ENCODE measurements at regions of chrX and their contacts with region 1.

Region 1: DNA sequence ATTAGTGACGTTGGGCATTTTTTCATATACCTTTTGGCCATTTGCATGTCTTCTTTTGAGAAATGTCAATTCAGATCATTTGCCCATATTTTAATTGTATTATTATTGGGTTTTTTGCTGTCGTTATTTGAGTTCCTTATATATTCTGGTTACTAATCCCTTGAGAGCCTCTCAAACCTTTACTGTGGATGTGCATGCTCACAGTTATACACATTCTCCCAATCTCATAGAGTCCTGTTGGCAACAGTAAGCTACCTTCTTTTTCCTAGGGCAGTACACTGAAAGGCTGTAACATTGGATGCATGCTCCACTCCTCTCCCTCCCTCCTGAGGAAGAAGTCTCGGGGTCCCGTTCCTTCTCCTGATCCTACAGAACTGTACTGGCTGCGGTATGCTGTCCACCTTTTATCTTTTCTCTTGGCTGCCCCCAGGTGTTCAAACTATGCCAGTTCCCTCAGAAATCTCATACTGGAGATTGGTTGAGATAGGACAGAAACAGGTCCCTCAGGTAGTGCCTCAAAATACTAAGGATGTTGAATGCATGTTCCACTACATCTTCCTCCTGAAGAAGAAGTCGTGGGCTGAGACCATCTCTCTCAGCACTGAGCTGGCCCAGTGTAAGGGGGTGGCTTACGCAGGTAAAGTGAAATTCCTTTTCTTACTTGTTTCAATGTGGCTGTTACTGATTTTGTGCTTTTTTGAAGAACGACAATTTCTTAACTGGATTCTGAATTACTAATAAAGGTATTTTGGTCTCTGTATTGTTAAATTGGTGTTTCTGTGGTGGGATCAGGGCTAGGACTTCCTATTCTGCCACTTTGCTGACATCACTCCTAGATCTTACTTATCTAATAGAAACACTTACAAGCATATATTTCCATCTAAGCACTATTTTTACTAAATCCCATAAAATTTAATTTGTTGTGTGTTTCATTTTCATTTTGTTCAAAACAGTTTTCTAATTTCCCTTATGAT is 145.4 kb upstream of the HUWE1 start:
- DNase-seq: peak; percentile 20
- H3K4me3 Mint-ChIP-seq: peak overlapping the region; percentile 35
- H3K27ac Mint-ChIP-seq: peak overlapping the region; percentile 13
- H3K4me1 Mint-ChIP-seq: peaks cover 20% of the 10 kb centered on the region
- H3K27me3 Mint-ChIP-seq: no peaks in the 10 kb centered on the region

Region 2: DNA sequence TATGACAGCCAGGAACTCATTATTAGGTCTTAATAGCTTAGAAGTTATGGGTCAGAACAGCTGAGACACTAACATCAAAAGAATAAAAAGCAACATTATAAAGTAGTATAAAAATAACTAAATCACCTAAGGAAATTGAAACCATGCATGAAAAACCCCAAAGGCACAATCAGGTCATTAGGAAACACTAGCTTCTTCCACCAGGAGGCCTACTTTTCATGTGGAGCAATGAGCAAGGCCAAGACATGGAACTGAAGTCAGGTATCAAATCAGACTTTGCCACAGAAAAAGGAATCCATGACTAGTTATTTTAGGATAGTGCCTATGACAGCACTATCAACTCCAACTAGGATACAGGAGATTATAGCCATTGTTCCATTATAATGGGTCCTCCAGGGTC is 153.3 kb before region 1 on chrX:
- intact Hi-C with region 1: loop called (anchors 2 kb)
- DNase-seq: no peak
- H3K4me3 Mint-ChIP-seq: no peak overlapping the region
- H3K27ac Mint-ChIP-seq: peak overlapping the region; percentile 61
- H3K4me1 Mint-ChIP-seq: peaks cover 42% of the 10 kb centered on the region
- H3K27me3 Mint-ChIP-seq: no peaks in the 10 kb centered on the region

Region 3: GRCh38 chrX:53714580-53715345 is 117.2 kb before region 1 on chrX:
- intact Hi-C with region 1: loop called (anchors 10 kb)
- DNase-seq: peak; percentile 70
- H3K4me3 Mint-ChIP-seq: peak overlapping the region; percentile 88
- H3K27ac Mint-ChIP-seq: peak overlapping the region; percentile 99
- H3K4me1 Mint-ChIP-seq: peaks cover 52% of the 10 kb centered on the region
- H3K27me3 Mint-ChIP-seq: no peaks in the 10 kb centered on the region

Region 4: DNA sequence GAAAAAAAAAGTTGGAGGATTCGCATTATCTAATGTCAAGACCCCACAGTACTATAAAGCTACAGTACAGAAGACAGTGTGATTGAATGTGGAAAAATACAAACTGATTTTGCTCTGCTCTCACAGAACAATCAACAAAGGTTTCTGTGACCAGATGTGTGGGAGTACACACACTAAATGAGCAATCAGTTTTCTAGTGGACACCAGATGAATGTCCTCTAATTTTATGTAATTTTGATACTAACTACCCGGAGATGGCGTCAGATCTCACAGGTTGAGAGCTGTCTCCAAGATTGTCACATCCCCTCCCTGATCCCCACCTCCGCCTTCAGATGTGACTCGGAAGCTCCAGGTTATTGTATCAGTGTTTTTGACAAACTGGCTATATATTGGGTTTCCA is 63.5 kb before region 1 on chrX:
- intact Hi-C with region 1: loop called (anchors 5 kb)
- DNase-seq: no peak
- H3K4me3 Mint-ChIP-seq: no peak overlapping the region
- H3K27ac Mint-ChIP-seq: no peak overlapping the region
- H3K4me1 Mint-ChIP-seq: peaks cover 7% of the 10 kb centered on the region
- H3K27me3 Mint-ChIP-seq: no peaks in the 10 kb centered on the region

Region 5: DNA sequence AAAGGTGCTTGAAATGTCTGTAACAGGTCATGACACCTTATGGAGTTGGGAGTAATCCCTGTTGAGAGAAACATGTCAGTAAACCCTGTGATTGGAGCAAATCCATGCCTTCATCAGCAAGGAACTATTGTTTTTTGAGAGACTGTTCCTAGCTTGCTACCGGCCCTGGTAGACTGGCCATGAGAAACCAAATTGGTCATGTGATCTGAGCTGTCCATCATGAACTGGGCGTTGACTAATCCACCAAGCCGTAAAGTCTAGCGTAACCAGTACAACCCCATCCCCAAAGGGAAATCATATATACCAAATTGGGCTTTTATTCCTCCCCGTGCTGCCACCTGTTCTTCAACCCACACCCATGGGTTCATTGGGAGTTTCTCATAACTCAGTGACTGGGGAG is 68.7 kb after region 1 on chrX:
- intact Hi-C with region 1: no loop called
- DNase-seq: no peak
- H3K4me3 Mint-ChIP-seq: no peak overlapping the region
- H3K27ac Mint-ChIP-seq: no peak overlapping the region
- H3K4me1 Mint-ChIP-seq: no peaks in the 10 kb centered on the region
- H3K27me3 Mint-ChIP-seq: peaks cover 7% of the 10 kb centered on the region

Region 6: DNA sequence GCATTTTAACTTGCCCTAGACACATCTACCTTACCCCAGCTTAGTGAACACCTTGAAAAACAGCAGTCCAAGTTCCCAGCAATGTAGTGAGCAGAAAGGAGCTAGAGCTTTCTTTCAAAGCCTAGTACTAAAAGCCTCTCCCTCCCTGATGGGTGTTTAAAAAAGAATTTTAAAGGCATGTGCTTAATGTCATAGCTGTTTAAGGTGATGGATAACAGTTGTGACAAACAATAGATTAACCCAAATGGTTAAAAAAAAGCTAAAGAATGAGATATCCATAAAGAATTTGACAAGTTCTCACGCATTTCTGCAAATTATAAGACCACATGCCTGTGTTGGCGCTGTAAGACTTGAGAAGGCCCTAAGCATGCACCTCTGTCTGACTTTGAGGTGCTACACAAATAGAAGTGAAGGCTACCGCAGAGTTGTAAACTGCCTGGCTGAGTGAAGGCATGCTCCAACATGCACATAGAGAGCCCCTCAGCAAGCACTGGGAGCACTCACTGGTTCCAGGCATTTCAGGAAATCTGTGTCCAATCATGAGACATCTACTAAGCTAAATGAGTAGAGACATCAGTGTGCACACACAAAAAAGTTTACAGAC is 118.3 kb after region 1 on chrX:
- intact Hi-C with region 1: no loop called
- DNase-seq: no peak
- H3K4me3 Mint-ChIP-seq: no peak overlapping the region
- H3K27ac Mint-ChIP-seq: no peak overlapping the region
- H3K4me1 Mint-ChIP-seq: no peaks in the 10 kb centered on the region
- H3K27me3 Mint-ChIP-seq: no peaks in the 10 kb centered on the region

Measured in activated T-helper 1 cell treated with anti-CD3 and anti-CD28 coated beads, Interleukin-12 subunit alpha, Interleukin-12 subunit beta, Interleukin-2, Interleukin-4 antibody, amounts not matched to agents 30 ng/mL and 10 ng/mL and 1 ng/mL, durations not matched to agents 14 hours and 24 hours and 36 hours (primary cell).